Ovary (tissue), 10 donors: ENCODE measurements at regions of chr11 and their contacts with region 1.

Region 1: GRCh38 chr11:130480711-130481140 is 32.3 kb downstream of the ADAMTS15 start:
- DNase-seq: no peak
- H3K4me3 ChIP-seq: no peak overlapping the region
- H3K27ac ChIP-seq: no peak overlapping the region
- H3K4me1 ChIP-seq: peaks cover 29% of the 10 kb centered on the region
- H3K27me3 ChIP-seq: no peaks in the 10 kb centered on the region
- CTCF ChIP-seq: no peak
- EP300 ChIP-seq: no peak
- POLR2A ChIP-seq: no peak

Region 2: DNA sequence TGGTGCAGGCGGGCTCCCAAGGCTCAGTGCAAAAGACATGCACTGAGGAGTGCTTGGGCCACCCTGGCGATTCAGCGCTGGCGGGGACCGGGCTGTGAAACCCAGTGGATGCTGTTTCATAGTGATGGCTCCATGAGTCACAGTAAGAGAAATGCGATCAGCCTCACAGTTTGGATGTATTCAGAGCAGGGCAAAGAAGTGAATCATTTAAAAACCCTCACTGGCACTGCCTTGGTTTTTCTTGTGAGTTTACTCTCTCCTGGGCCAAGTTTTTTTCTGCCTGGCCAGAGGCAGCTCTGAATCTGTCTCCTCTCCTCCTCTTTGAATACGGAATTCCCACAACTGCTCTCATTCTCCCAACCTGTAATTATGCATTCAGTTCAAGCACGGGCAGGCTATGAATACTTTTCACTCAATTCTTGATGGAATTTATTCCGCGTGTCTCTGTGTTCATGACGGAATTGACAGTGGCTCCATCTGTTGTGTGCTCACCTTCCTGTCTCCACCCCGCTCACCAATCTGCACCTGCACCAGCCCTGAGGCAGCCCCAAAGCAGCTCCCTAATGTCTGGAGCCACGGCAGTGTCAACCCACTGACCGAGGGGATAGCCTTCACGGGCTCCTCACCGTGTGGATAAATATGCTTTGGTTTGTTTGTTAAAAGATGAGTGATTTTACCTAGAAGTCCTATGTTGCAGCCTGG is 67.2 kb before region 1 on chr11:
- intact Hi-C with region 1: no loop called
- DNase-seq: no peak
- H3K4me3 ChIP-seq: no peak overlapping the region
- H3K27ac ChIP-seq: no peak overlapping the region
- H3K4me1 ChIP-seq: no peaks in the 10 kb centered on the region
- H3K27me3 ChIP-seq: no peaks in the 10 kb centered on the region
- CTCF ChIP-seq: no peak
- EP300 ChIP-seq: no peak
- POLR2A ChIP-seq: no peak

Region 3: GRCh38 chr11:130515829-130516553 is 35.3 kb after region 1 on chr11:
- intact Hi-C with region 1: loop called in 1 of 4 experiments (anchors 5 kb)
- DNase-seq: no peak
- H3K4me3 ChIP-seq: no peak overlapping the region
- H3K27ac ChIP-seq: no peak overlapping the region
- H3K4me1 ChIP-seq: peaks cover 5% of the 10 kb centered on the region
- H3K27me3 ChIP-seq: no peaks in the 10 kb centered on the region
- CTCF ChIP-seq: no peak
- EP300 ChIP-seq: no peak
- POLR2A ChIP-seq: no peak

Region 4: DNA sequence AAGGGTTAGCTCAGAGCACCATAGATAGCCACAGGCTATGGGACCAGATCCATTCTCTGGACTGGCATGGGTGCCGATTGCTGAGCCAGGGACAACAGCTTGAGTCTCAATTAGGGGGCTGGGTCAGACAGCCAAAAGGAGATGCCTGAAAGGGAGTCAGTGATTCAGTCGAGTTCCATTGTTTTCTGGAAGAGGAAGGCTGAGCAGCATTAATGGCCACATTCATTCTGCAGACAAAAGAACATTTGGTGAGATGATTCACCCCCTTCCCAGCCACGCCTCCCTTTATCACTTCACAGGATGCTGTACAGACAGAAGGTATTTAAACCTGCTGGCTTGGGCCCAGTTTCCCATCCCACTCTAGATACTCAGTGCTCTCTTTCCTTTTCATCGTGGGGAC is 99.6 kb after region 1 on chr11:
- intact Hi-C with region 1: no loop called
- DNase-seq: peak; percentile 38 to 69 (median 53)
- H3K4me3 ChIP-seq: no peak overlapping the region
- H3K27ac ChIP-seq: no peak overlapping the region
- H3K4me1 ChIP-seq: peaks cover 9% of the 10 kb centered on the region
- H3K27me3 ChIP-seq: no peaks in the 10 kb centered on the region
- CTCF ChIP-seq: no peak
- EP300 ChIP-seq: no peak
- POLR2A ChIP-seq: no peak